Heart right ventricle (tissue), 16 donors: ENCODE measurements at regions of chr13 and their contacts with region 1.

Region 1: DNA sequence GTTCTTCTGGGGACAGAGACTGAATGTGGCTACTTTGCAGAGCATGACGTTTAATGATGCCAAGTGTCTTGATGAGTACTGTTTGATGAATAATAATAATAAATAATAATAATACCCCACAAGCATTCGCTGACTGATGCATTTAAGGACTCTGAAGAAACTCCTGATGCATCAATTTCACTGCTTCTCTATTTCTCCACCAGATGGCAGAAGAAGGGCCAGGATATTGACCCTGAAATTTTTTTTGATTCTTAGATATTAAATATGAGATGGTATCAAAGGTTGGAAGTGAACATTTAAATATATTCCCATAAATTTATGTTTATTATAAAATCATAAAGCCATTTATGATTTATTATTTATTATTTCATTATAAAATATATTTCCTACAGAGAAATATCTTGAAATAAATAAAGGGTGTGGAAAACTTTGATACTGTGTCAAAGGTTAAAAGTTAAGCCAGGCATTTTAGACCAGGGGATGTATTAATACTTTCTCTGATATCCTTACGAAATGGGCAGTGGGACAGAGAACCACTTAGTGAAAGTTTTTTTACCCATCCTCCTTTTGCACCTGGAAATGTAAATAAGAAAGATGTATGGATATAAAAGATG is 170.9 kb downstream of the LACC1 start:
- DNase-seq: peak in 1 of 2 donors; percentile 13
- ATAC-seq: peak in 1 of 8 donors; percentile 20
- H3K4me3 ChIP-seq: no peak overlapping the region
- H3K27ac ChIP-seq: no peak overlapping the region
- H3K4me1 ChIP-seq: peaks cover 0 to 15% (median 2%) of the 10 kb centered on the region in 9 donors
- H3K27me3 ChIP-seq: peaks cover 0 to 6% (median 0%) of the 10 kb centered on the region in 7 donors
- CTCF ChIP-seq: peak; percentile 75 to 94 (median 86)

Region 2: DNA sequence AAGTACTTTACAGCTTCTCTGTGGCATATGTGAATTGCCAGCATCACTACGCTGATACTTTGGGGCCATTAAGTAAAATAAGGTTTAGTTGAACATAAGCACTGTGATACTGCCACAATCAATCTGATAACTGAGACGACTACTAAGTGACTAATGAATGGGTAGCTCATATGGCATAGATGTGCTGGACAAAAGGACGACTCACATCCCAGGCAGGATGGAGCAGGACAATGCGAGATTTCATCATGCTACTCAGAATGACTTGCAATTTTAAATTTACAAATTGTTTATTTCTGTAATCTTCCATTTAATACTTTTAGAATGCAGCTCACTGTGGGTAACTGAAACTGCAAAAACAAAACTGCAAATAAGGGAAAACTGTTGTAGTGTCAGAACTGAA is 184.7 kb before region 1 on chr13:
- intact Hi-C with region 1: no loop called
- DNase-seq: no peak
- ATAC-seq: no peak
- H3K4me3 ChIP-seq: no peak overlapping the region
- H3K27ac ChIP-seq: no peak overlapping the region
- H3K4me1 ChIP-seq: no peaks in the 10 kb centered on the region
- H3K27me3 ChIP-seq: no peaks in the 10 kb centered on the region
- CTCF ChIP-seq: no peak

Region 3: GRCh38 chr13:43915451-43915850 is 135.1 kb before region 1 on chr13:
- intact Hi-C with region 1: loop called in 1 of 10 experiments (anchors 10 kb)
- DNase-seq: no peak
- ATAC-seq: no peak
- H3K4me3 ChIP-seq: no peak overlapping the region
- H3K27ac ChIP-seq: no peak overlapping the region
- H3K4me1 ChIP-seq: peaks cover 0 to 17% (median 12%) of the 10 kb centered on the region in 9 donors
- H3K27me3 ChIP-seq: peaks cover 0 to 93% (median 0%) of the 10 kb centered on the region in 7 donors
- CTCF ChIP-seq: no peak

Region 4: DNA sequence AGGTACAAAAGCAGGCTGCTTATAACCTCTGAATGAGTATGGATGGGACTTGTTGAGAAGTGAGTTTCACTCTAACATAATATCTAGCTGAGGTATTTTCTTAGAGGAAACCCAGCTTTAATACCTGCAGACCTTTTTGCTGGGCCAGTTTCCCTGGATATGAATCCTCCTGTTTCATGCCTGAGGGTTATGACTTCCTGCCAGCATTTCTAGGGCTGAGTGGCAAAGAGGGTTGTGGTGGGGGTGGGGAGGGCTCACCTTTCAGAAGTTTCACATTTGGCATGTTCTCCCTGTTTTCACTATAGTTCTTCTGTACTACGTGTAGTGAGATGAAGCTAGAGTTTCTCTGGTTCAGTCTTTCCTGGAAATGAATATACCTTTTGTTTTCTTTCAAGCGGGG is 97.2 kb before region 1 on chr13:
- intact Hi-C with region 1: no loop called
- DNase-seq: no peak
- ATAC-seq: no peak
- H3K4me3 ChIP-seq: no peak overlapping the region
- H3K27ac ChIP-seq: no peak overlapping the region
- H3K4me1 ChIP-seq: peaks cover 0 to 9% (median 0%) of the 10 kb centered on the region in 9 donors
- H3K27me3 ChIP-seq: peaks cover 0 to 16% (median 0%) of the 10 kb centered on the region in 7 donors
- CTCF ChIP-seq: no peak

Region 5: GRCh38 chr13:44116562-44117332 is 66.2 kb after region 1 on chr13:
- intact Hi-C with region 1: loop called in 2 of 10 experiments (anchors 2 to 5 kb)
- DNase-seq: peak in 1 of 2 donors; percentile 40
- ATAC-seq: peak; percentile 66 to 98 (median 87)
- H3K4me3 ChIP-seq: no peak overlapping the region
- H3K27ac ChIP-seq: peak overlapping the region; percentile 19 to 77 (median 74)
- H3K4me1 ChIP-seq: peaks cover 8 to 37% (median 23%) of the 10 kb centered on the region in 9 donors
- H3K27me3 ChIP-seq: no peaks in the 10 kb centered on the region
- CTCF ChIP-seq: peak in 3 of 9 donors; percentile 30 to 36 (median 34)

Region 6: GRCh38 chr13:44191504-44192171 is 141.1 kb after region 1 on chr13:
- intact Hi-C with region 1: loop called in 3 of 10 experiments (anchors 1 to 5 kb)
- DNase-seq: peak in 1 of 2 donors; percentile 71
- ATAC-seq: peak; percentile 76 to 97 (median 95)
- H3K4me3 ChIP-seq: peak overlapping the region in 3 of 10 donors; percentile 21
- H3K27ac ChIP-seq: peak overlapping the region in 6 of 10 donors; percentile 10 to 62 (median 51)
- H3K4me1 ChIP-seq: peaks cover 0 to 11% (median 0%) of the 10 kb centered on the region in 9 donors
- H3K27me3 ChIP-seq: no peaks in the 10 kb centered on the region
- CTCF ChIP-seq: peak; percentile 51 to 80 (median 70)

Region 7: DNA sequence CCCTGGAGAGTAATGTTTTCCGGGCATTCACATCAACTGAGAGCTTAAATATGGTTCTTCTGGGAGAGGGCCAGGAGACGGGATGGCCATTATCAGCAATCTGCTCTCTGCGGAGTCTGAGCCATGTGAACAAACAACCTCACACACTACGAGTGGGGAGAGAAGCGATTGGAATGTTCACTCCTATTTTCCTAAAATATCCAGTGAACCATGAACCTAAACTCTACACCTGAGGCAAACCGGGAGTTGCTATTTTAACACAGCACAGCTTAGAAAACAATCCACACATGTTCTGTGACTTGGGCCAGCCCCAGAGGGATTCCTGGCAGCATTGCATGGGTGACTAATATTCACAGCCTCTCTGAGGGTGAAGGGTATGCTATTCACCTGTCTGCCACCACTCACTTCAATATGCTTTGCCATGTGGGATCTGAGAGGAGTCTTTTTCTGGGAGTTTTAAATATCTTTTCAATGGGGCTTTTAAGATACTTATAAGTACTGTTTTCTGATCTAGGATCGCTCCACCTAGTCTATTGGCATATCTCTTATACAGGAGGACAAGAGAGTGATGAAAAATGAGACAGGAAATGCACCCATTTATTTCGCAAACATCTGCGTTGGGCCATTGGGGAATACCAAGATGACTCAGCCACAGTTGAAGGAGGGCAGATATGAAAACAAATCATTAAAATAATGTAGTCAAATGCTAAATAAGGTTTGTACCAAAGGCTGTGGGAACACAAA is 250.5 kb after region 1 on chr13:
- intact Hi-C with region 1: loop called in 2 of 10 experiments (anchors 10 kb)
- DNase-seq: peak in 1 of 2 donors; percentile 74
- ATAC-seq: peak; percentile 54 to 92 (median 84)
- H3K4me3 ChIP-seq: no peak overlapping the region
- H3K27ac ChIP-seq: peak overlapping the region; percentile 12 to 82 (median 70)
- H3K4me1 ChIP-seq: peaks cover 9 to 78% (median 55%) of the 10 kb centered on the region in 9 donors
- H3K27me3 ChIP-seq: no peaks in the 10 kb centered on the region
- CTCF ChIP-seq: no peak

Region 8: DNA sequence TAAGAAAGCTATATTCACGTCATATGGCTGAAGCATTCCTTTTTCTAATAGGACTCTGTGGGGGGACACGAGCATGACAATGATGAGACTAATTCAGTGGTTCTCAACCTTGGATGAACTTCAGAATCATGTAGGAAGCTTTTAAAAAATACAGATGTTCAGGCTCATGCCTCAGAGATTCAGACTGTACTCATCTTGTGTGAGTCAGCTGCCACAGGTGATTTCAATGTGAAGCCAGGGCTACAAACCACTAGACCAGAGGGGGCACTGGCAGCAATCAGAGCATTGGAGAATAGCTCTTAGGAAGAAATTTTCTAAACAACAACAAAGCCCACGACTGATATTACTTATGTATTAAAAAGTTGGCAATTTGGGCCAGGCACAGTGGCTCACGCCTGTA is 414.8 kb after region 1 on chr13:
- intact Hi-C with region 1: loop called in 1 of 10 experiments (anchors 10 kb)
- DNase-seq: no peak
- ATAC-seq: no peak
- H3K4me3 ChIP-seq: no peak overlapping the region
- H3K27ac ChIP-seq: no peak overlapping the region
- H3K4me1 ChIP-seq: peaks cover 0 to 5% (median 0%) of the 10 kb centered on the region in 9 donors
- H3K27me3 ChIP-seq: no peaks in the 10 kb centered on the region
- CTCF ChIP-seq: no peak